KBM-7 (cell line): ENCODE measurements at regions of chr1 and their contacts with region 1.

Region 1: GRCh38 chr1:107782217-107782845 is 182.6 kb downstream of the VAV3 start:
- DNase-seq: peak; percentile 79

Region 2: GRCh38 chr1:107727882-107728281 is 54.4 kb before region 1 on chr1:
- in situ Hi-C with region 1: no loop called
- DNase-seq: no peak

Region 3: DNA sequence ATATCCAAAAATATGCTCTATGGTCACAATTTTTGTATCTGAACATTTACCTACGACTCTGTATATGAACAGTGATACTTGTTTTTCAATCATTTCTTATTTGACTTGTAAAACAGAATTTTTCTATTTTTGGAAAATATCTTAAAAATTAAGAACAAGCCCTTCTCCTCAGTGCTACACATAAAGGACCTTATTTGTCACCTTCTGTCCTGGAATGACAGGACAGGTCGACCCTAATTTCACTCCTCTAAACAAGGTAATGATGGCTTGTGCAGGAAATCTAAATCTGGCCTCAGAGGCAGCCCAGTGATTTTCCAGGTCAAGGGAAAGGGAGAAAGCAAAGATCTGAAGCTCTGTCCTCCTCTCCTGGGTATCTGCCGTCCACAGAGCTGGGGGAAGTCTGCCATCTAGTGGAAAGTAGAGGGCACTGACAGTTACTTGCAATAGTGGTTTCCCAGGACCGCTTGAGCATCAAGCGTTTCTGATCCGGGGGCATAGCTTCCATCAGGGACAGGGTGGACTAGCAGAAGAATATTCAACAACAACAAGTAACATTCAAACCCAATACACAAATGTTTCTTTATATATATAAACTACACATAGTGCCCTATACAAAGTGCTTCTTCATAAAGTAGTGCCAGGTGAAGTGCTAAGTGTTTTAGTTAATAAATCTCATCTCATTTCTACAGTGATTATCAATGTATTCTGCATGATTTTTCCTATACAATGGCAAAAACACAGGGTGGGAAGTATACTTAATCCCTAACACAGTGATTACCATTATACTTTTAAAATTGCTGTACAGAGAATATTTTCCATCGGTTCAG is 343.2 kb after region 1 on chr1:
- in situ Hi-C with region 1: loop called (anchors 10 kb)
- DNase-seq: peak; percentile 79